Left ventricle myocardium inferior (tissue), 1 donor: ENCODE measurements at regions of chr1 and their contacts with region 1.

Region 1: GRCh38 chr1:212162635-212163034 is 122.6 kb upstream of the PPP2R5A start:
- DNase-seq: peak; percentile 48
- H3K4me3 ChIP-seq: no peak overlapping the region
- H3K27ac ChIP-seq: peak overlapping the region; percentile 70
- H3K4me1 ChIP-seq: peaks cover 60% of the 10 kb centered on the region
- H3K27me3 ChIP-seq: no peaks in the 10 kb centered on the region
- CTCF ChIP-seq: no peak

Region 2: GRCh38 chr1:211908453-211908852 is 254.2 kb before region 1 on chr1:
- intact Hi-C with region 1: no loop called
- DNase-seq: no peak
- H3K4me3 ChIP-seq: no peak overlapping the region
- H3K27ac ChIP-seq: no peak overlapping the region
- H3K4me1 ChIP-seq: no peaks in the 10 kb centered on the region
- H3K27me3 ChIP-seq: peaks cover 18% of the 10 kb centered on the region
- CTCF ChIP-seq: no peak

Region 3: DNA sequence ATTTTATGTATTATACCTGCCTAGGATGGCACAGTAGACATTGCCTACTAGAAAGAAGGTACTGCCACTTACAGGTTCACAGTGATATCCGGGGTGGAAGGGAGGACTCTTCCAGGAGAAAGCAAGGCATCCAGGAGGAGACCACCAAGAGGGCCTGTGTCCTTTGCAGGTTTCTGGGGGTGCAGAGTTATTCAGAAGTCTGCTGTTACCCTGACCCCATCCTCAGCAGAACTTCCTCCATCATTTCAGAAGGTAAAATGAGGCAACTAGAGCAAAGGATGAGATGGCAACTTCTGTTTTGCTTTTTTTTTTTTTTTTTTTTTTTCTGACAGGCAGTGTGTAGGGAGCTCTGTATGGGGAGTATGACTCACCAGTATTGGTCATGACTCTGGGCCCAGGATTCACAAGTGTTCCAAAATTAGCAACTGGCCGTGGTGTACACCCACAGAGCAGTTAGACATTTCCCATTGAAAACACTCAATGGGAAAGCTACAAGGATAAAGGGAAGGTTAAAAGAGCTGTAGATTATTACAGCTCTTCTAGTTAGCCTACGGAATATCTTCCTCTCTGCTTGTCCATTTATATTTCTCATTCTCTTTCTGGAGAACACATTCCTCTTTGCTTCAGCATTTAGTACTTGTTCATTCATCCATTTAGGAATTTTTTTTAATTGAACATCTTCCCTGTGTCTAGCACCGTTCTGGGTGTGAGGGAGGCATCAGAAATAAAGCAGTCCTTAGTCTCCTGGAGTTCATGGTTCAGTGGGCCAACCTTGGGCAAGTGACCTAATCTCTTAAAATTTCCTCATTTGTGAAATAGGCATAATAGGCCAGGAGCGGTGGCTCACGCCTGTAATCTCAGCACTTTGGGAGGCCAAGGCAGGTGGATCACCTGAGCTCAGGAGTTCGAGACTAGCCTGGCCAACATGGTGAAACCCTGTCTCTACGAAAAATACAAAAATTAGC is 72.1 kb after region 1 on chr1:
- intact Hi-C with region 1: no loop called
- DNase-seq: peak; percentile 29
- H3K4me3 ChIP-seq: no peak overlapping the region
- H3K27ac ChIP-seq: peak overlapping the region; percentile 87
- H3K4me1 ChIP-seq: peaks cover 62% of the 10 kb centered on the region
- H3K27me3 ChIP-seq: no peaks in the 10 kb centered on the region
- CTCF ChIP-seq: no peak

Region 4: DNA sequence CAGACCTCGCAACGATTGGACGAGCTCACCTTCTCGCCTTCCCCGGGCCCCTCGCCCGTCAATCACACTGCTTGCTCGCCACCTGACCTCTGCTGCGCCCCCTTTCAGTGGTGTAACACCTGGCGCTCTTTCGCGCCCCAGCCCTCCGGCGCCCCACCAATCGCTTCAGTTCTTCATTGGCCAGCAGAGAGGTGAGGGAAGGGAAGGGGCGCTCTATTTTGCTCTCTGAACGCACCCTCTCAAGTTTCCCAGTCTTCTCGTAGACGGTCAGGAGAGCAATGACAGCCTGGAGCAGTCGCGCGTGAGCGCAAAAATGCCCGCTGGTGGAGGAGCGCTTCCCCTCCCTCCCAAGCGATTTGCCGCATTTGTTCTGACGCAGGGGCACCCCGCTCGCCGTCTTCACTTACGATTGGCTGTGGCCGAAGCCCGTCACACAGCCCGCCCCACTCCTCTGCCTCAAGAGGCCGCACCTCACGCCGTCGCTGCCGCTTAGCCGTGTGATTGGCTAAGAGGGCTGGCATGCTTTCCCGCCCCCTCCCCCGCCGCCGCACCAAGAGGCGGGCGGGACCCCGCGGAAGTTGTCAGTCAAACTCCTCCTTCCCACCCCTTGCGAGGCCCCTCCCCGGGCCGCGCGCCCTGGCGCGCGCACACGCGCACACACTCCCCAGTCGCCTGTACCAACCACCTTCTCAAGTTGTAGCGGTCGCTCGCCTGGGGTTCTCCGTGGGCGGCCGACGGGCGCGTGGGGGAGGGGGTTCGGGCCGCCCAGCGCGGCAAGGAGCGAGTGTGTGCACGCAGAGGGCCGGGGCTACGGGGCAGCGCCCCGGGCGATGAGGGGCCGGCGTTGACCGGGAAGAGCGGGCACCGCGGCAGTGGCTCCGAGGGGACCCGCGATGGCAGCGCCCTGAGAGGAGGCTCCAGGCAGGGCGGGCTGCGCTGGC is 122.4 kb after region 1 on chr1 and contains the start of gene PPP2R5A:
- intact Hi-C with region 1: loop called (anchors 10 kb)
- DNase-seq: peak; percentile 99
- H3K4me3 ChIP-seq: peak within 1 kb of the TSS; percentile 94
- H3K27ac ChIP-seq: peak within 1 kb of the TSS; percentile 99
- H3K4me1 ChIP-seq: peaks cover 53% of the 10 kb centered on the region
- H3K27me3 ChIP-seq: no peaks in the 10 kb centered on the region
- CTCF ChIP-seq: peak; percentile 40
- total RNA-seq, gene PPP2R5A: 69.3 TPM